ENCODE measurements at regions of chr3 and their contacts with region 1.

Region 1: DNA sequence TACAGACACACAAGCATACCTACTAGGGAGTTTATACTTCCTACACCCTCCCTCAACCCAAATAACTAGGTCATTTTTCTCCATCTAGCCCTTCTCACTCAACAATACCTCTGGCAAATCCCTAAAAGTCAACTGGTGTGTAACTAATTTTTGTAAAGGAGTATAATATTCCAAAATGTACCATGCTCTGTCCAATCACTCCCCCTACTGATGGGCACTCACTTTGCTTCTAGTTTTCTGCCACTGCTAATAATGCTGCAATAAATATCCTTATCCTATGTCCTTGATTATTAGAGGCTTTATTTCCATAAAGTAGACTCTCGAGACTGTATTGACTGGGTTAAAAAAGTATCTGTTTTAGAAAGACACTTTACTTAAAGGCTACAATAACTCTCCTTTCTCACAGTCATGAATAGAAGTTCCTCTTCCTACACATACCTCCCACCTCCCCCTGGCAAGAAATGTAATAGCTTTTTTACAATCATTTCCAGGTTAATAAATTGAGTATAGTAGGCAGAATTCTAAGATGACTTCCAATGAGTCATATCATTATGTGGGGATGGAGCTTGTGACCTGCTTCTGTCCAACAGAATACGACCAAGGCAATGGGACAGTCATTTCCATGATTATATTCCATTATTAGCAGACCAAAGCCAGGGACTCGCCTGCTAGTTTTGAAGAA is 30.0 kb downstream of the SHQ1 start:
- DNase-seq: peak in 1 of 4 experiments; percentile 12
- ATAC-seq: peak; percentile 50; the same call in 1 of the 3 replicates
- H3K4me3 ChIP-seq: no peak overlapping the region
- H3K27ac ChIP-seq: no peak overlapping the region
- H3K4me1 ChIP-seq: peaks cover 0 to 7% of the 10 kb centered on the region in 2 experiments; a peak in 2 of 5 replicates
- H3K27me3 ChIP-seq: no peaks in the 10 kb centered on the region
- CTCF ChIP-seq: peak in 2 of 3 experiments; percentile 60 to 71; a peak in 4 of 6 replicates
- EP300 ChIP-seq: no peak
- POLR2A ChIP-seq: no peak
- RAD21 ChIP-seq: peak; percentile 76 to 84

Region 2: GRCh38 chr3:72665701-72666443 is 152.4 kb before region 1 on chr3:
- CTCF ChIA-PET with region 1: interaction called, 3 read pairs
- POLR2A ChIA-PET with region 1: no interaction called
- in situ Hi-C with region 1: loop called (anchors 5 kb)
- intact Hi-C with region 1: loop called (anchors 1 kb)
- DNase-seq: peak; percentile 44 to 60 (median 46)
- ATAC-seq: peak; percentile 90
- H3K4me3 ChIP-seq: no peak overlapping the region
- H3K27ac ChIP-seq: no peak overlapping the region
- H3K4me1 ChIP-seq: no peaks in the 10 kb centered on the region
- H3K27me3 ChIP-seq: no peaks in the 10 kb centered on the region
- CTCF ChIP-seq: peak; percentile 48 to 64 (median 63)
- EP300 ChIP-seq: no peak
- POLR2A ChIP-seq: no peak
- RAD21 ChIP-seq: peak; percentile 56 to 75

Region 3: DNA sequence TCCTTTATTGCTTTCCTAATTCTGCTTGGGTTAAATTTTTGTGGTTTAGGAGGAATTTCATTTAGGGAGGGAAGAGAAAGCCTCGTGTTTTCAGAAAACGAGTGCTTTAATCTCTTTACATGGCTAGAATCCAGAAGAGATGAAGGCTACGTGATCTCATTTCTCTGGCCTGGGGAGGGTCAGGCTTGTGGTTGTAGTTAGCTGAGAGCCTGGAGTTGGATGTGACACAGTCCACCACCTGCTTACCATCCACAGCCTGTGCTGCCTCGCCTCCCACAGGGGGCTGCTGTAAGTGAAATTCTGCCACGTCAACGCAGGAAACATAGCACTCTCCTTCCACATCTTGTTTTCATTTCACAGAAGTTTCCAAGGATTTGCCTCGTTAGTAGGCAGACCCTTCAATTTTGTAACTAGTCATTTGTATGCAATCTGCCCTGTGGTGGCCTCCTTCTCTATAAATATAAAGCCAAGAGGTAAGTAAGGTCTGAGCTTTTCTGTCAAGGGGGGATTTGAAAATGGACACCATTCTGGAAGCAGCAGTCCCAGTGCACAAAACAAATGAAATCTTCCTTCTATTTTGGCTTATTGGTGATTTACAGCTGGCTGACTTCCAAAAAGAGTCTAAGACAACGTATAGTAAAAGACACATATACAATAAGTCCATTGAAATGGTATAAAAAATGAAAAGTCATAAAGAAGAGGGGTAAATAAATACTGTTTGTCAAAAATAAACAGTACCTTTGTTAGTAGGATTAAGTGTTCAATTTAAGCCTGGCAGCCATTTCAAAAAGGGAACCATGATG is 73.0 kb after region 1 on chr3:
- CTCF ChIA-PET with region 1: no interaction called
- POLR2A ChIA-PET with region 1: no interaction called
- in situ Hi-C with region 1: no loop called
- intact Hi-C with region 1: no loop called
- DNase-seq: peak; percentile 15 to 48 (median 18)
- ATAC-seq: peak; percentile 44
- H3K4me3 ChIP-seq: no peak overlapping the region
- H3K27ac ChIP-seq: 0 out of 3 replicates have a peak overlapping the region, but pooled peaks have one; percentile 17
- H3K4me1 ChIP-seq: peaks cover 4 to 19% of the 10 kb centered on the region in 2 experiments; a peak in 3 of 5 replicates
- H3K27me3 ChIP-seq: no peaks in the 10 kb centered on the region
- CTCF ChIP-seq: 0 out of 6 replicates have a peak, but pooled peaks of 1 of the 3 experiments have one; percentile 19
- EP300 ChIP-seq: no peak
- POLR2A ChIP-seq: no peak
- RAD21 ChIP-seq: no peak

Measured in K562 (cell line).